ENCODE measurements at regions of chr7 and their contacts with region 1.

Region 1: DNA sequence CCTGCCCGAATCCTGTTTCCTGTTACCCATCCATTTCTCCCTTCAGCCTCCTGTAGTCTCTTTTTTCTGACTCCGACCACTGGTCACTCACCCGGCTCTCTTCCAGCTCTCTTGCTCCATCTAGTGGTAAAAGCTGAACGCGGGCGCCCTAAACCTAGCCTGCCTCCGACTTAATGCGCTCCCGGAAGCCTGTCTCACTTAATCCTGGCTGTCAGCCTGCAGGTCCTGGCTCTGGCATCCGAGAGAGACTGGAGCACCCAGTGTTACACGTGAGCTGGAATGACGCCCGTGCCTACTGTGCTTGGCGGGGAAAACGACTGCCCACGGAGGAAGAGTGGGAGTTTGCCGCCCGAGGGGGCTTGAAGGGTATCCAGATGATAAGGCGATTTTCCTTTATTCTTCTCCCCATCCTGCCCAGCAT is 10.3 kb downstream of the SUMF2 start:
- DNase-seq: peak; percentile 88
- H3K4me3 ChIP-seq: no peak overlapping the region; a peak in 1 of 4 replicates
- H3K27ac ChIP-seq: no peak overlapping the region
- H3K4me1 ChIP-seq: peaks cover 11 to 17% of the 10 kb centered on the region in 2 experiments; a peak in 3 of 4 replicates
- H3K27me3 ChIP-seq: no peaks in the 10 kb centered on the region
- CTCF ChIP-seq: peak; percentile 99
- EP300 ChIP-seq: 0 out of 4 replicates have a peak, but pooled peaks of 1 of the 2 experiments have one; percentile 27
- RAD21 ChIP-seq: peak; percentile 99

Region 2: GRCh38 chr7:55641273-55641691 is 433.1 kb before region 1 on chr7:
- CTCF ChIA-PET with region 1: interaction called, 25 read pairs
- POLR2A ChIA-PET with region 1: no interaction called
- DNase-seq: peak; percentile 66
- H3K4me3 ChIP-seq: no peak overlapping the region; a peak in 1 of 4 replicates
- H3K27ac ChIP-seq: no peak overlapping the region
- H3K4me1 ChIP-seq: no peaks in the 10 kb centered on the region
- H3K27me3 ChIP-seq: no peaks in the 10 kb centered on the region; the same call in 1 of the 2 replicates
- CTCF ChIP-seq: peak; percentile 96
- EP300 ChIP-seq: no peak
- RAD21 ChIP-seq: peak; percentile 100

Region 3: DNA sequence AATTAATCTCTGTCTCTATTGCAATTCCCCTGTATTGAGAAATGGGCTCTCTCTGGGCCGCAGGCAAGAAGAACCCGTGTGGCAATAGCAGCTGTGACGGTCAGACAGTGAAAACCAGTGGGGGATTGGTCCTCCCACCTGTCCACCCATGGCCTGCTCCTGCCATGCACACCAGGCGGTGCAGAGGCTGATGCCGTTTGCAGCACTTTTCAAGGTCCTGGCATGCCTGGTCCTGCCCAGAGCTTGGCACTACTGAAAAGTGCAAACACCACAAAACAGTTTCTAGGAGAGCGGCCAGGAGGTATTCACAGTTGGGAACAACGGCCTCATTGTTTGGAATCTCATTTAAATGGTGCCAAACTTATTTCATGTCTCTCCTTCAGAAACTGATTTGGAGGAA is 64.7 kb before region 1 on chr7:
- CTCF ChIA-PET with region 1: interaction called, 67 read pairs
- POLR2A ChIA-PET with region 1: no interaction called
- DNase-seq: no peak
- H3K4me3 ChIP-seq: no peak overlapping the region
- H3K27ac ChIP-seq: no peak overlapping the region
- H3K4me1 ChIP-seq: no peaks in the 10 kb centered on the region
- H3K27me3 ChIP-seq: no peaks in the 10 kb centered on the region
- CTCF ChIP-seq: no peak
- EP300 ChIP-seq: no peak
- RAD21 ChIP-seq: no peak

Region 4: GRCh38 chr7:56033671-56034432 is 40.5 kb before region 1 on chr7:
- CTCF ChIA-PET with region 1: interaction called, 10 read pairs
- POLR2A ChIA-PET with region 1: interaction called, 4 read pairs
- DNase-seq: peak; percentile 95
- H3K4me3 ChIP-seq: peak overlapping the region; percentile 53 to 78
- H3K27ac ChIP-seq: peak overlapping the region; percentile 50 to 76; a peak in 3 of 4 replicates
- H3K4me1 ChIP-seq: no peaks in the 10 kb centered on the region; a peak in 1 of 4 replicates
- H3K27me3 ChIP-seq: no peaks in the 10 kb centered on the region
- CTCF ChIP-seq: peak; percentile 53
- EP300 ChIP-seq: no peak; a peak in 2 of 4 replicates
- RAD21 ChIP-seq: peak; percentile 24; the same call in 1 of the 2 replicates

Region 5: GRCh38 chr7:56063882-56064625 is 10.3 kb before region 1 on chr7 and contains the start of gene SUMF2:
- CTCF ChIA-PET with region 1: interaction called, 25 read pairs
- POLR2A ChIA-PET with region 1: interaction called, 7 read pairs
- DNase-seq: peak; percentile 99
- H3K4me3 ChIP-seq: peak within 1 kb of the TSS; percentile 70 to 88
- H3K27ac ChIP-seq: peak within 1 kb of the TSS; percentile 78 to 90
- H3K4me1 ChIP-seq: peaks cover 4 to 23% of the 10 kb centered on the region in 2 experiments; a peak in 3 of 4 replicates
- H3K27me3 ChIP-seq: no peaks in the 10 kb centered on the region
- CTCF ChIP-seq: peak; percentile 24; the same call in 1 of the 2 replicates
- EP300 ChIP-seq: 0 out of 4 replicates have a peak, but pooled peaks of 1 of the 2 experiments have one; percentile 16
- RAD21 ChIP-seq: peak; percentile 37; the same call in 1 of the 2 replicates
- polyA plus RNA-seq, gene SUMF2: 130 and 162 TPM in 2 replicates

Measured in SK-N-SH (cell line).